ENCODE measurements at regions of chr11 and their contacts with region 1.

Region 1: DNA sequence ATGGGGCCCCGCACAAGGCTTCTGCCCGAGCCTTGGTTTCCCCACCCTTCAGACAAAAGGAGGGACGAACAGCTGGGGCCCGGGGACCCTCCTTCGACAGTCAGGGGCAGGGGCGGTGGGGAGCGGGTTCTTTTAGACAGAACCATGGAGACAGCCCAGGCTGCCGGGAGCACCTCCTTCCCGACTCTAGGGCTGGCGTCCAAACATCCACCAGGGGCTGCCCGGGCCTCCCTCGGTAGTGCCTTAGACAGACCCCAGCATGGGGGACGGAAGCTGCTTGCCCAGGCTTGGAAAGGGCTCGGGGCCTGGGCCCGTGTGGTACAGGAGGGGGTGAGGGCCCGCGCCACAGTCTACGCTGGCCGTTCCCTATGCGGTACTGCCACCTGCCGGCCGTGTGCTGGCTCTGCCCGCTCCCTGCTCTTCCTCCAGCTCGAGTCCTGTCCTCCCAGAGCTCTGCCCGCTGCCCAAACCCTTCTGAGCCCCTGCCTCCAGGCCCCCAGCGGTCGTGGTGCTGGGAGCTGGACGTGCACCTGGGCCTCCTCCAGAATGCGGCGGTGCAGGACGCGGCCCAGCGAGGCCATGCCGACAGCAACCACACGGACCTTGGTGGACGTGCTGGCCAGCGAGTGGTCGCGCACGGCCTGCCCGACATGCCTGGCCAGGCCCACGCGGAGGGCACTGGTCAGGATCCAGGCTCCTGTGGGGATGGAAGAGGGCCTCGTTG is 20.1 kb downstream of the TSSC4 start:
- DNase-seq: peak; percentile 80
- H3K4me3 Mint-ChIP-seq: no peak overlapping the region
- H3K27ac Mint-ChIP-seq: no peak overlapping the region
- H3K4me1 Mint-ChIP-seq: peaks cover 3% of the 10 kb centered on the region
- H3K27me3 Mint-ChIP-seq: no peaks in the 10 kb centered on the region

Region 2: DNA sequence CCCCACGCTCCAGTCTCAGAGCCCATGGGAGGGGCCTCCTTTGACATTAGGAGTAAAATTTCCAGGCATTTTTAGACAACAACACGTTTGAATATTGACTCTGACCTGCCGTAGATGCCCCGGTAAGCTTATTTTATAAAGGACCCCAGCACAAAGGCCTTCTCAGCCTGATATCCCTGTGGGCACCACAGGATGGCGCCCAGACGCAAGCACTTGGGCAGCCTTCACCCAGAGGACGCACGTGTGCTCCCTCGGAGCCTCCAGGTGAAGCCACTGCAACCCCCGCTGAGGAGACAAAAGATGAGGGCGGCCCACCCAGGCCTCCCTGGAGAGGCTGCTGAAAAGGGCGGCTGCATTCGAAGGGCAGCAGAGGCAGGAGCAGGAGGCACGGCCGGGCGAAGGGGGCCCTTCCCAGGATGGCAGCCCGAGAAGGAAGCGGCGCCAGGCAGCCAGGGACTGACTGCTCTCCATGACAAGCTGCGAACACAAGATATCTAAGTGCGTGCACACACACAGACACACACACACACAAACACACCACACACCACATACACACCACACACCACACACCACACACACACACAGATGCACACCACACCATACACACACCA is 233.9 kb before region 1 on chr11:
- CTCF ChIA-PET with region 1: interaction called, 37 read pairs
- DNase-seq: peak; percentile 61
- H3K4me3 Mint-ChIP-seq: no peak overlapping the region
- H3K27ac Mint-ChIP-seq: no peak overlapping the region
- H3K4me1 Mint-ChIP-seq: peaks cover 6% of the 10 kb centered on the region
- H3K27me3 Mint-ChIP-seq: peaks cover 22% of the 10 kb centered on the region

Region 3: GRCh38 chr11:2298795-2299761 is 121.6 kb before region 1 on chr11:
- CTCF ChIA-PET with region 1: interaction called, 279 read pairs
- DNase-seq: peak; percentile 42
- H3K4me3 Mint-ChIP-seq: peak overlapping the region; percentile 68
- H3K27ac Mint-ChIP-seq: peak overlapping the region; percentile 11
- H3K4me1 Mint-ChIP-seq: peaks cover 33% of the 10 kb centered on the region
- H3K27me3 Mint-ChIP-seq: peaks cover 11% of the 10 kb centered on the region

Region 4: DNA sequence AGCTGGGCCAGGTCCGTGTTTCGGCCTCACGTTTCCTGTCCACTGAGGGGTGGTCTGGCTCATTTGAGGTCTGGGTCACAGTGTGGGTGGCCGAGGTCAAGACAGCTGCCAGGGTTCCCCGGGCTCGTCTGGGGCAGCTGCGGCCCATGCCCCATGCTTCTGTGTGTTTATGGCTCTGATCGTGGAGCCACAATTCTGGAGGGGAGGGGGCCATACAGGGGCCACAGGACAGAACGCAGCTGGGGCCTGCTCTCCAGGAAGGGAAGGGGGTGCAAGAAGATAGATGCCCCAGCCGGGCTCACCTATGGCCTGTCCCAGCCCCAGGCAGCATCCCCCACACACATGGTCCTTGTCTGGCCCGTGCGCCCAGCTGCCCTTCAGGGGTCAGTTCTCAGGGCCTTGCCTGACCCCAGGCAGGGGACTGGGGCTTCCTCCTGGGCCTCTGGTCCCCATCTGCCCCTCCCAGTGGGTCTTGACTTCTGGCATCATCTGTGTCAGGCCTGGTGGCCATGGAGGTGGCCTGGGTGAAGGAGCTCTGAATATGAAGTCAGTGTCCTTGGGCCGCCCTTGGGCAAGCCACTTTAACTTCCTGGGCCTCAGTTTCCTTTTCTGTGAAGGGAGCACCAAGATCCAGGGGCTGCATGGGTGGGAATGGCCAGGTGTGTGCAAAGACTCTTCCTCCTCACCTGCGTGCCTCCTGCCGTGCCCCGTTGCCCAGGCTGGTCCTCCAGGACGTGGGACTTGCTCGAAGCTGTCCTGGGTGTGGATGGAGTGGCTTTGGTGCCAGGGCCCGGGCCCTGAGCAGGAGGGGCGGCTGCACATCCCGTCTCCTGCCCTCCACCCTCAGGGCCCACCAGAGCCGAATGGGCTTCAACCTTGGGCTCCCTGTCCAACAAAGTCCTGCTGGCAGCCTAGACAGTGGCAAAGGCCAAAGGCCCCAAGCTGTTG is 110.3 kb before region 1 on chr11:
- CTCF ChIA-PET with region 1: interaction called, 279 read pairs
- DNase-seq: peak; percentile 13
- H3K4me3 Mint-ChIP-seq: no peak overlapping the region
- H3K27ac Mint-ChIP-seq: no peak overlapping the region
- H3K4me1 Mint-ChIP-seq: peaks cover 20% of the 10 kb centered on the region
- H3K27me3 Mint-ChIP-seq: peaks cover 4% of the 10 kb centered on the region

Region 5: DNA sequence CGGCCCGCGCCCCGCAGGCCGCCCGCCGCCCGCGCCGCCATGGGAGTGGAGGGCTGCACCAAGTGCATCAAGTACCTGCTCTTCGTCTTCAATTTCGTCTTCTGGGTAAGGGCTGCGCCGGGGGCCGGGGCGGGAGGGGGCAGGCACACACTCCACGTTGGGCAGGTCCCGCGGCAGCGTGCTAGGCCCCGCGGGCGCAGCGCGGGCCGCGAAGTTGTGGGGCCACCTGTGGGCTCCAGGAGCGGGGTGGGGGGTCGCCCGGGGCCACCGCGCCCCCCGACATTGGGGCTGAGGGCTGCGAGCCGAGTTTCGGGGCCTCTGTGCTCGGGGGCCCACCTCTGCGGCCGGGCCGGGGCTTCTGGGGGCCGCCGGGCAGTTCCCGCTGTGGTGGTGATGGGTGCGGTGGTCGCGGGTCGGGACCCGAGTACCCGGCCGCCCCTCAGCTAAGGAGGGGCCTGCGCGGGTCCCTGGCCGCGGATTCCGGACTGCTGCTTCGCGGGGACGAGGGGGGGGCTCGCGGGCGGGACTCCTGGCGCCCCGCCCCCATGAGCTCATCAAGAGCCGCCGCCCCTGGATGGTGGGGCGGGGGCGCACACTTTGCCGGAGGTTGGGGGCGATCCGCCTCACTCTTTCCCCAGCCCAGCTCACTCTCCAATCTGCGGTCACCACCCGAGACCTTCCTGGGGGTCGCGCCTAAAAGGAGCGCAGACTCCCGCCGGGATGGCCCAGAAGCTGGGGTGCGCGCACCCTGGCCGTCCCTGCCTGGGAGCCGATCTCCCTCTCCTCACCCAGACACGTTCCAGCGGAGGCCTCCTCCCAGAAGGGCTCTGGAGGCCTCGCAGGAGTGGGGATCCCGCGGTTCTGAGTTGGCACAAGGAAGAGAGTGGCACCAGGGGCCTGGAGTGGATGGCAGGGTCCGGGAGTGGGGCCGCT is 42.9 kb before region 1 on chr11:
- CTCF ChIA-PET with region 1: no interaction called
- DNase-seq: peak; percentile 75
- H3K4me3 Mint-ChIP-seq: peak overlapping the region; percentile 80
- H3K27ac Mint-ChIP-seq: peak overlapping the region; percentile 85
- H3K4me1 Mint-ChIP-seq: peaks cover 25% of the 10 kb centered on the region
- H3K27me3 Mint-ChIP-seq: peaks cover 21% of the 10 kb centered on the region

Region 6: DNA sequence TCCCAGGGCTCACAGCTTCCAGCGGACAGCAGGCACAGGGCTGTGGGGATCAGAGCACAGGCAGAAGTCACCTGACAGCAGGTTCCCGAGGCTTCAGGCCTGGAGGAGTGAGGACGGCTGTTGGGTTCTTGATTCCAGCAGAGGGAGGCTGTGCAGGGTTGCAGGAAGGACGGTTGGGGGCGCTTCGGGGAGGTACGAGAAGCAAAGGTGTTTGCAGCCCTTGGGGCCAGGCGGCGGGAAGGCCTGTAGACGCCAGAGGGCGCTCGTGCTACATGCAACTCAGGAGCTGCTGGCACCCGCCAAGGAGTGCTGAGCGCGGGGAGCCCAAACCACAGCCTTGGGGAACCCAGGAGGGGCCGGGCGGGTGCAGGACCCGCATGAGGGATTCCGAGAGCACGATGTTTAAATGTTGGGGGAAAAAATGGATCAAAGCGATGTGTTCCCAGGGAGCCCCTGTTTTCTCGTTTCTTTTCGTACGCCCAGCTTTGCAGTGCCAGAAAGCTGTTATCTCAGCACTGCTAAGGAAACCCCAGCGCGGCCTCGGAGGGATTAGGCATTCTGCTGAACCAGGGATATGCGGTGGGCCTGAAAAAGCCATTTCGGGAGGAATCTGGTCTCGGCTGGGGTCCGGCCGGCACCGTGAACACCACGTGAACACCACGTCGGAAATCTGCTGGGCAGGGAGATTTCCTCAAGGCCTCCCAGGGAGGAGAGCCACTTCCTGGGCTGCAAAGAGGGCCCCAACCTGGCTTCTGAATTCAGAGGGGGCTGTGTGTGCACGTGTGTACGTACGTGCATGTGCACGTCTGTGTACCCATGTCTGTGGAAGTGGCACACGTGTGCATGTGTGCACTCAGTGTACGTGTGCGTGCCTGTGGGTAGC is 112.3 kb after region 1 on chr11:
- CTCF ChIA-PET with region 1: interaction called, 185 read pairs
- DNase-seq: peak; percentile 95
- H3K4me3 Mint-ChIP-seq: peak overlapping the region; percentile 40
- H3K27ac Mint-ChIP-seq: peak overlapping the region; percentile 76
- H3K4me1 Mint-ChIP-seq: peaks cover 19% of the 10 kb centered on the region
- H3K27me3 Mint-ChIP-seq: peaks cover 5% of the 10 kb centered on the region

Measured in activated naive CD4-positive, alpha-beta T cell treated with anti-CD3 and anti-CD28 coated beads, Interleukin-2, amount 10 ng/mL, durations not matched to agents 7 days and 5 days (primary cell).